Activated CD4-positive, alpha-beta T cell treated with anti-CD3 and anti-CD28 coated beads for 36 hours (primary cell): ENCODE measurements at regions of chr5 and their contacts with region 1.

Region 1: DNA sequence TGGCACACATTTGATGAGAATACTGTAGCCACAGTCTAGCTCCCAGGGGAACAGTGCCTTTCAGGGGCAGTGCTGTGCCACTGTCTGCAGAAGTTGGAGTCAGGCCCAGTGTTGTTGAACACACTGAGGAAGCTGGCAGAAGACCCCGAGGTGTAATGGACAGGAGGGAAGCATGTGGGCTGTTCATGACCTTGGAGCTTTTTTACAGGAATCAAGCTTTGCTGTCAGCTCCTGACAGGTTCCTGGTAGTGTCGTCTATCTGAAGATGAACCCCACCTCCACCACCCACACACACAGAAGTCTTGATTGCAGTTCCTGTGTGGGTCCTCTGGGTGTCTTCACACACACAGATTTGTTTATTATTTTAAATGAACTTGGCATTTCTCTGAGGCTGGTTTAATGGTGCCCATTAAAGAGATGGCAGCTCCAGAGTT is 40.3 kb upstream of the TNFAIP8 start:
- DNase-seq: peak; percentile 78
- ATAC-seq: peak; percentile 77
- H3K4me3 Mint-ChIP-seq: peak overlapping the region; percentile 28
- H3K27ac Mint-ChIP-seq: peak overlapping the region; percentile 91
- H3K4me1 Mint-ChIP-seq: peaks cover 91% of the 10 kb centered on the region
- H3K27me3 Mint-ChIP-seq: no peaks in the 10 kb centered on the region

Region 2: DNA sequence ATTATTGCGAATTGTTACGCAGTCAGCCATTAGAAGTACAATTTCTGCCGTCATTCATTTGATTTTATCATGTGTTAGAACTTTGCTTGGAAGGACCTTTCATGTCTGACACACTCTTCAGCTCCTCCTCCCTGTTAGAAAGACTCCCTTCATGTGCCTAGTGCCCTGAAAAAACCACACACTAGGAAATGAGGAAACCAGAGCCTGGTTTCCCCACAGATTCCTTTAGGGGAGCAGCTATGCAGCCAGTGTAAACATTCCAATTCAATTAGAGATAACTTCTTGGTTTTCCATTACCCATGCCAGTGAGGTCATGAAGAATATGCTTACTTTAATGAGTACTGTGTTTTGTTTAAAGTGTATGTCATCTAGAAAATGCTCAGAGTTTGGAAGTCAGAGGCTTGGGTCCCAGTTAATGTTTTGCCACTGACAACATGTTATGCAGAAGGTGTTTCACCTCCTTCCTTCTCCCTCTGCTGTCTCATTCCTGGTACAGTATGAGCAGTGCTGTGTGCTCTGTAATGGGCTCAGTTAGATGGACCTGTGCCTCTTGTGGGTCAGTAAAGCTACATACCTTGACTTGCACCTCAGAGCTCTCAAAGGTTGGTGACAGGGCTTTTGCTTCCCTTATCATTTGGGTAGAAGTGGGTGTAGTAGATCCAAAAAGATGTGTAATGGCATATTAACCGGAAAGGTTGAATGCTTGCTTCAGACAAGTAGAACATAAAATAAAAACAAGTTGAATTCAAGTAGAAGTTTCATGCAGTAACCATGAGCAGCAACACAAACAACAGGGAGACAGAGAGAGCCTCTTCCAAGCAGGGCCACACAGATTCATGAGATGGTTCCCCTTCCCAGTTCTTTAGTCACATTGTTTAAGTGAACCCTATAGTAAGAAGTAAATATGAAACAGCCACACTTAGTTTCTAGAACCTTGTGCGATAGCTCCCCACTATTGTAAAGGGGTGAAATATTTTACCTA is 12.3 kb before region 1 on chr5:
- CTCF ChIA-PET with region 1: interaction called, 4 read pairs
- POLR2A ChIA-PET with region 1: no interaction called
- intact Hi-C with region 1: loop called in 1 of 2 experiments (anchors 2 kb)
- DNase-seq: no peak
- ATAC-seq: peak; percentile 68
- H3K4me3 Mint-ChIP-seq: peak overlapping the region; percentile 12
- H3K27ac Mint-ChIP-seq: peak overlapping the region; percentile 84
- H3K4me1 Mint-ChIP-seq: peaks cover 90% of the 10 kb centered on the region
- H3K27me3 Mint-ChIP-seq: no peaks in the 10 kb centered on the region

Region 3: DNA sequence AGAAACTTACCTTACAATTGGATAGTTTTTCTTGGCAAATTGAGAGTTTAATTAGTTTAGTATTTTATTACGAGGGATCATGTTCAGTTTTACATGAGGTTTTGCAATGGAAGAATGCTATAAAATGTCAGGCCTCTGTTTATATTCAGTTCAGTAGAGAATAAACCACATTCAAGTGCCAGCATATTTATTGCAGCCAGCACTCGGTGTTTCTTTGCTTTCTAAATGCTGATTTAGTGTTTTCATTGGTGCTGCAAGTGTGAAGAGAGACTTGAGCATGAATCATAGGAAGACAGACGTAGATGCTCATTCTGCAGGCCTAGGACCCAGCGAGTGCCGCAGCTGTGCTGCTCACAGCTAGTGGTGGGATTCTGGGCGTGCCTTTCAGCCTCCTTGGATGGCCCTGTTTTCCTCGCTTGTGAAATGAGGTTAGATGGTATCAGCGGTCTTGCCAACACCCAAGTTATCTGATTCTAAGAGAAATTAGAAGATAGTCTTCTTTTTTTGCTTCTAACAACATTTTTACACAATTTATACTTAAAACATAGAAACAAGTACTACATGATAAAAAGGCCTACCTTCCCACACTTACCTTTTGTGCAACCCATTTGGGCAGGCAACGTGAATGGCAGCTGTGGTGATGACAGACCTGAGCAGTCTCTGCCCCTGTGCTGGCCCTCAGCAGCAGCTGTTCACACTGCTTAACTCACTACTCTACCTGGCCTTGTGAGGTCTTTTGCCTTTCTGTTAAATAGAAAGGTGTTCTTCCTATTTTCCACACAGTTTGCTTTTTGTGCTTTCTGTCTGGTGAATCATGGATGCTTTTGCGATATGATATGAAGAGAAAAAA is 13.4 kb after region 1 on chr5:
- CTCF ChIA-PET with region 1: interaction called, 7 read pairs
- POLR2A ChIA-PET with region 1: interaction called, 5 read pairs
- intact Hi-C with region 1: loop called in 1 of 2 experiments (anchors 1 kb)
- DNase-seq: peak; percentile 80
- ATAC-seq: peak; percentile 58
- H3K4me3 Mint-ChIP-seq: peak overlapping the region; percentile 45
- H3K27ac Mint-ChIP-seq: peak overlapping the region; percentile 98
- H3K4me1 Mint-ChIP-seq: peaks cover 96% of the 10 kb centered on the region
- H3K27me3 Mint-ChIP-seq: no peaks in the 10 kb centered on the region

Region 4: DNA sequence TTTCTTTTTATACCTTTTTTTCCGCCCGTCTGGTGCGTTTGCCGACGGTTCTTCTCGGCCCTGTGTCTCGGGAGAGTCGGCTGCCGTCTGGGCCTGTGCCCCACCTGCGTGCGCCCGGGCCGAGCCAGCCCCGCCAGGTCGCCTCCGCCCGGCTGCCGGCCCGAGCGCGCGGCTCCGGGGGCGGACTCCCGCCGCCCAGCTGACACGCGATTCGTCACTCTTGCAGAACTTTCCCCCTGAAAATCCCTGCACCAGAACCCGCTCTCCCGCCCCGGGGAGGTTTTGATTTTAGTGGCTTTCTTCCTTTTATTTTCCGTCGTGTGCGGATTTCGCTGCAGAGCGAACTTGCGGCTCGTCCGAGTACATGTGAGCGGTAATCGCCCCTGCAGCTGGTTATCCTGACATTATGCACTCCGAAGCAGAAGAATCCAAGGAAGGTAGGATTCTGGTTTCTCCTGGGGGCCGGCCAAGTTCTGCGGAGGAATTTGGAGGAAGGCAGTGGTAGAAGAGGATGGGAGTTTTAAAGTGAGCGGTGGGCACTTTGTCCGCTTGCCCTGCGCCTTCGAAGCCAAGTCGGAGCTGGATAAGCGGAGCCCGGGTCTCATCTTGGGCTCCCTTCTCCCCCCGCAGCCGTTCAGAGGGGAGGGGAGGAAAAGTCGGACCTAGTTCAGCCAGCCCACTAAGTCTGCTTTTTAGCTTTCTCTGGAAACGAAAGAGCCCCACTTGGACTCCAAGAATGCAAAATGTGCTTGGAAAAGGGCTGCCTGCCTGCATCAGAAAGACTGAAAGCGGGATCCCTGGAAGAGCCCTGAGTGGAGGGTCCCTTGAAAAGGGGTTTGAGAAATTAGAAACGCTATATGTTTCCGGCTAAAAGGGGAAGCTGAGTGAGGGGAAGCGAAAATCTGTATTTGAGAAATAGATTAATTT is 40.4 kb after region 1 on chr5 and contains the start of gene TNFAIP8:
- CTCF ChIA-PET with region 1: interaction called, 14 read pairs
- POLR2A ChIA-PET with region 1: interaction called, 4 read pairs
- intact Hi-C with region 1: no loop called
- DNase-seq: peak; percentile 91
- ATAC-seq: peak; percentile 65
- H3K4me3 Mint-ChIP-seq: peak within 1 kb of the TSS; percentile 98
- H3K27ac Mint-ChIP-seq: peak within 1 kb of the TSS; percentile 99
- H3K4me1 Mint-ChIP-seq: peaks cover 62% of the 10 kb centered on the region
- H3K27me3 Mint-ChIP-seq: no peaks in the 10 kb centered on the region
- total RNA-seq, gene TNFAIP8: 166 to 171 TPM